Motor neuron (in vitro differentiated cells): ENCODE measurements at regions of chr11 and their contacts with region 1.

Region 1: DNA sequence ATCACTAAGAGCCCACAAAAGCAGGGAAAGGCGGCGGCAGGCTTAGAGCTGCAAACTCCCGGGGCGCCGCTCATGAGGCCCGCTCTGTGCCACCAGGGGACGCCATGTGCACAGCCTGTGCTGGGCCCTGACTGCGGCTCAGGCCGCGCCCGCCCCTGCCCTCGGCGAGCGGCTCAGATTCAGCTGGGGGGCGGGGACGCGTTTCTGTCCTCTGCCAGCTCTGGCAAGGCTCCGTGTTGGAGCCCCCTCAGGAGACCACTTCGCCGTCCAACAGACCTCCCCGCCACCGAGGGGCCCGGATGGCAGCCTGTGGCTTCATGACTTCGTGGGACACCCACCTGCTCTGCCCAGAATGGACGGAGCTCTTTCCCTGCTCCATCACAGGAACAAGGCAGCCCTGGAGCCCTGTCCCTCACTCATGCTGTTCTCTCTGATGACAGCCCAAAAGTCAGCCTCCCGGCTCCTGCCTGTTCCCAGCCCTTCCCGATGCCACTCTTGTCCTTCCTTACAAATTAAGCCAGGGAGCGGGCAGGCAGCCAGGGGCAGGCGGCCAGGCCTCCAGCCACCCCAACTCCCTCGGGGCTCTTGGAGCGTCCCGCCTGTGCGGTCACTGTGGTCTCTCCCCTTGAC is 69.1 kb downstream of the NAT10 start:
- ATAC-seq: peak; percentile 97 to 100 (median 98)
- H3K4me3 ChIP-seq: peak overlapping the region; percentile 13 to 25 (median 21)
- H3K27ac ChIP-seq: no peak overlapping the region
- H3K4me1 ChIP-seq: peaks cover 3 to 4% of the 10 kb centered on the region in 2 donors

Region 2: DNA sequence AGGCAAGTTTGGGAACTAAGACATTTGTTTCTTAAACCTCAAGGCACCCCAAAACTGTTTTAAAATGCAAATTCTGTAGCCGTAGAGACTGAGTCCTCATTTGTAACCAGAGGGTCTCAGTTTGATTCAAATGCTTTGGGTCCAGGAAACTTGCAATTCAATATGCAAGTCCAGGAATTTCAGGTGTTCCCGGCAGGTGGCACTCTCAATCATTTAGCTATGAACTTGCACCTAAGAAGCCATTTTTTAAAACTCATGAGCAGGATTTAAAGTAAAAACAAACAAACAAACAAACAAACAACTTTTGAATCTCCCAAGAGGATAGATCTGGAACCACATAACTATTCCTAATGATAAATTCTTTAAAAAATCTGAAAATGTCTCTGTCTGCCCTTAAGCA is 192.0 kb after region 1 on chr11:
- in situ Hi-C with region 1: loop called in 5 of 9 experiments (anchors 10 to 25 kb)
- ATAC-seq: no peak
- H3K4me3 ChIP-seq: no peak overlapping the region
- H3K27ac ChIP-seq: no peak overlapping the region
- H3K4me1 ChIP-seq: peaks cover 4 to 8% of the 10 kb centered on the region in 2 donors

Region 3: GRCh38 chr11:34492806-34493414 is 318.4 kb after region 1 on chr11:
- in situ Hi-C with region 1: loop called in 3 of 9 experiments (anchors 25 kb)
- ATAC-seq: peak in 5 of 8 experiments; percentile 44 to 72 (median 66)
- H3K4me3 ChIP-seq: no peak overlapping the region
- H3K27ac ChIP-seq: no peak overlapping the region
- H3K4me1 ChIP-seq: no peaks in the 10 kb centered on the region